ENCODE measurements at regions of chr1 and their contacts with region 1.

Region 1: GRCh38 chr1:156480411-156481192 is 20.0 kb downstream of the MEF2D start:
- DNase-seq: peak; percentile 90

Region 2: DNA sequence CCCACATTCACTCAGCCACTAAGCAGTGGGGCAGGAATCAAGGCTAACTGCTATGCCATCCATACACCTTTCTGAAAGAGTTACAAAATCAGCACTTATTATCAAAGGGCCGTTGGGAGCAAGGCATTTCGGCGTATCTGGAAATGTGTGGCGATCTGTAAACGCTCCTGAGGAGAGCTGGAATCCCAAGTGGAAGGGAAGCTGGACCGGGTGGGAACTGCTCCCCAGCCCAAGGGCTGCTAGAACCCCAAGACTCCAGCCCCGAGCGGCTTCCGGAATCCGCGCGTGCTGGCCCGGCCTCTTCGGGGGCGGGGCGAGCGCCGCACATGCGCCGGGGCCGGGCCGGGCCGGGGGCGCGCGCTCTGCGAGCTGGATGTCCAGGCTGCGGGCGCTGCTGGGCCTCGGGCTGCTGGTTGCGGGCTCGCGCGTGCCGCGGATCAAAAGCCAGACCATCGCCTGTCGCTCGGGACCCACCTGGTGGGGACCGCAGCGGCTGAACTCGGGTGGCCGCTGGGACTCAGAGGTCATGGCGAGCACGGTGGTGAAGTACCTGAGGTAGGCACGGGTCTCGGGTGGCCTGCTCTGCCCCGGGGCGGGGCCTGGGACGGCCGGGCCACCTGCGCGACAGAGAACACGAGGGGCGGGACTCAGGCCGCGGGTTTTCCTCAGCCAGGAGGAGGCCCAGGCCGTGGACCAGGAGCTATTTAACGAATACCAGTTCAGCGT is 111.0 kb after region 1 on chr1 and contains the start of gene NAXE:
- intact Hi-C with region 1: loop called in 1 of 2 experiments (anchors 10 kb)
- DNase-seq: peak; percentile 92
- total RNA-seq, gene NAXE: 62.5 to 82.1 TPM

Region 3: GRCh38 chr1:156601122-156601830 is 120.7 kb after region 1 on chr1 and contains the start of gene GPATCH4:
- intact Hi-C with region 1: loop called (anchors 10 kb)
- DNase-seq: peak; percentile 94
- total RNA-seq, gene GPATCH4: 28.3 to 37.7 TPM